Naive thymus-derived CD4-positive, alpha-beta T cell (primary cell): ENCODE measurements at regions of chr19 and their contacts with region 1.

Region 1: GRCh38 chr19:37172368-37173366 is at the start of gene ZNF585A:
- DNase-seq: peak; percentile 68 to 92 (median 88)
- ATAC-seq: peak; percentile 100
- H3K4me3 ChIP-seq: peak within 1 kb of the TSS; percentile 90
- H3K4me3 Mint-ChIP-seq: peak within 1 kb of the TSS in 3 of 10 donors; percentile 36 to 73 (median 39)
- H3K27ac ChIP-seq: peak within 1 kb of the TSS; percentile 84
- H3K27ac Mint-ChIP-seq: no peak within 1 kb of the TSS
- H3K4me1 ChIP-seq: no peaks in the 10 kb centered on the region
- H3K4me1 Mint-ChIP-seq: peaks cover 0 to 16% (median 4%) of the 10 kb centered on the region in 7 donors
- H3K27me3 ChIP-seq: no peaks in the 10 kb centered on the region
- H3K27me3 Mint-ChIP-seq: no peaks in the 10 kb centered on the region
- total RNA-seq, gene ZNF585A: 3.5 to 24.3 (median 7.2) TPM

Region 2: GRCh38 chr19:36378625-36379509 is 793.8 kb before region 1 on chr19 and contains the start of gene ZFP14:
- CTCF ChIA-PET with region 1: no interaction called
- POLR2A ChIA-PET with region 1: no interaction called
- intact Hi-C with region 1: loop called in 1 of 2 experiments (anchors 1 kb)
- DNase-seq: peak; percentile 86 to 95 (median 93)
- ATAC-seq: peak; percentile 99
- H3K4me3 ChIP-seq: peak within 1 kb of the TSS; percentile 86
- H3K4me3 Mint-ChIP-seq: peak within 1 kb of the TSS; percentile 82 to 98 (median 94)
- H3K27ac ChIP-seq: peak within 1 kb of the TSS; percentile 86
- H3K27ac Mint-ChIP-seq: peak within 1 kb of the TSS; percentile 55 to 98 (median 94)
- H3K4me1 ChIP-seq: peaks cover 0 to 10% of the 10 kb centered on the region in 2 donors
- H3K4me1 Mint-ChIP-seq: peaks cover 9 to 23% (median 21%) of the 10 kb centered on the region in 7 donors
- H3K27me3 ChIP-seq: no peaks in the 10 kb centered on the region
- H3K27me3 Mint-ChIP-seq: no peaks in the 10 kb centered on the region
- total RNA-seq, gene ZFP14: 5.3 to 24.0 (median 9.2) TPM

Region 3: DNA sequence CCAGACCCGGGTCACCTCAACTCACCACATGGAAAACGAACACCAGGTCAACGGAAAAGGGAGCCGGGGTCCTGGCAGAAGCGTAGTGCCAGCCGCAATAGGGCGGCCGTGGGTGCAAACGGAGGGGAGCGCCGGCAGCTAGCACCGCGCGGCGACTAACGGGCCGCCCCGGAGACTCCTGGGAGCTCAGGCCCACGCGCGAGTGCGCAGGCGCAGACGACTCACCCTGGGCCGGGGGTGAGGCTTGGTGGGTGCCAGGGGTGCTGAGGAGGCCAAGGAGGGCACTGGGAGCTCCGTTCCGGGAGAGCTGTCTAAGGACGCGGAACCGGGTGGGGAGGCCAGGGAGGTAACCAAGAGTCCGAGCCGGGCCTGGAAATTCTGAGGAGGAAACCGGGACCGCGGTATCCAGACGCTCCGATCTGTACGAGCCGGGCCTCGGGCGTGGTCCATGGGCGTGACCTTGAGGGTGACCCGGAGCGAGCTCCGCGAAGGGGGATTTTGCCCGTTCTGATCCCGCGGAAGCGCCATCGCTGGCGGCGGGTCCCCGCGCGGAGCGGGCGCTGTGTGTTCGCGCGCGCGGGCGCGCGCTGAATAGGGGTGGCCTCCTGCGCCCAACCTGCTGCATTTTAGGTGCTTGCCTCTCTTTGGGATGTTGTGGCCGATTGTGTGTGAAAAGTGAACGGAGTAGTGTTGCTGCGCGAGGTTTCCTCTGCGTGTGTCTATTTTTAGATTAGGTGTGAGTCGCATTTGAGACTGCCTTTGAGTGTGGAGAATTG is 567.4 kb before region 1 on chr19 and contains the start of gene ZNF382:
- CTCF ChIA-PET with region 1: no interaction called
- POLR2A ChIA-PET with region 1: no interaction called
- intact Hi-C with region 1: loop called in 1 of 2 experiments (anchors 1 kb)
- DNase-seq: peak; percentile 77 to 92 (median 86)
- ATAC-seq: peak; percentile 80
- H3K4me3 ChIP-seq: peak within 1 kb of the TSS; percentile 95
- H3K4me3 Mint-ChIP-seq: peak within 1 kb of the TSS; percentile 81 to 99 (median 93)
- H3K27ac ChIP-seq: peak within 1 kb of the TSS; percentile 84
- H3K27ac Mint-ChIP-seq: peak within 1 kb of the TSS; percentile 78 to 98 (median 93)
- H3K4me1 ChIP-seq: peaks cover 7 to 15% of the 10 kb centered on the region in 2 donors
- H3K4me1 Mint-ChIP-seq: peaks cover 20 to 32% (median 27%) of the 10 kb centered on the region in 7 donors
- H3K27me3 ChIP-seq: no peaks in the 10 kb centered on the region
- H3K27me3 Mint-ChIP-seq: no peaks in the 10 kb centered on the region
- total RNA-seq, gene ZNF382: 5.4 to 20.2 (median 12.2) TPM

Region 4: GRCh38 chr19:36850559-36851442 is 321.9 kb before region 1 on chr19 and contains the start of gene ZNF345:
- CTCF ChIA-PET with region 1: no interaction called
- POLR2A ChIA-PET with region 1: no interaction called
- intact Hi-C with region 1: loop called (anchors 1 to 5 kb)
- DNase-seq: peak; percentile 62 to 91 (median 88)
- ATAC-seq: peak; percentile 93
- H3K4me3 ChIP-seq: peak within 1 kb of the TSS; percentile 92
- H3K4me3 Mint-ChIP-seq: no peak within 1 kb of the TSS
- H3K27ac ChIP-seq: peak within 1 kb of the TSS; percentile 86
- H3K27ac Mint-ChIP-seq: no peak within 1 kb of the TSS
- H3K4me1 ChIP-seq: peaks cover 9 to 16% of the 10 kb centered on the region in 2 donors
- H3K4me1 Mint-ChIP-seq: peaks cover 0 to 22% (median 13%) of the 10 kb centered on the region in 7 donors
- H3K27me3 ChIP-seq: no peaks in the 10 kb centered on the region
- H3K27me3 Mint-ChIP-seq: no peaks in the 10 kb centered on the region
- total RNA-seq, gene ZNF345: 6.8 to 18.2 (median 7.8) TPM

Region 5: GRCh38 chr19:37114020-37114419 is 58.6 kb before region 1 on chr19:
- CTCF ChIA-PET with region 1: no interaction called
- POLR2A ChIA-PET with region 1: no interaction called
- intact Hi-C with region 1: no loop called
- DNase-seq: no peak
- ATAC-seq: no peak
- H3K4me3 ChIP-seq: peak overlapping the region; percentile 0
- H3K4me3 Mint-ChIP-seq: peak overlapping the region in 1 of 10 donors; percentile 21
- H3K27ac ChIP-seq: no peak overlapping the region
- H3K27ac Mint-ChIP-seq: no peak overlapping the region
- H3K4me1 ChIP-seq: no peaks in the 10 kb centered on the region
- H3K4me1 Mint-ChIP-seq: peaks cover 0 to 4% (median 0%) of the 10 kb centered on the region in 7 donors
- H3K27me3 ChIP-seq: no peaks in the 10 kb centered on the region
- H3K27me3 Mint-ChIP-seq: no peaks in the 10 kb centered on the region

Region 6: DNA sequence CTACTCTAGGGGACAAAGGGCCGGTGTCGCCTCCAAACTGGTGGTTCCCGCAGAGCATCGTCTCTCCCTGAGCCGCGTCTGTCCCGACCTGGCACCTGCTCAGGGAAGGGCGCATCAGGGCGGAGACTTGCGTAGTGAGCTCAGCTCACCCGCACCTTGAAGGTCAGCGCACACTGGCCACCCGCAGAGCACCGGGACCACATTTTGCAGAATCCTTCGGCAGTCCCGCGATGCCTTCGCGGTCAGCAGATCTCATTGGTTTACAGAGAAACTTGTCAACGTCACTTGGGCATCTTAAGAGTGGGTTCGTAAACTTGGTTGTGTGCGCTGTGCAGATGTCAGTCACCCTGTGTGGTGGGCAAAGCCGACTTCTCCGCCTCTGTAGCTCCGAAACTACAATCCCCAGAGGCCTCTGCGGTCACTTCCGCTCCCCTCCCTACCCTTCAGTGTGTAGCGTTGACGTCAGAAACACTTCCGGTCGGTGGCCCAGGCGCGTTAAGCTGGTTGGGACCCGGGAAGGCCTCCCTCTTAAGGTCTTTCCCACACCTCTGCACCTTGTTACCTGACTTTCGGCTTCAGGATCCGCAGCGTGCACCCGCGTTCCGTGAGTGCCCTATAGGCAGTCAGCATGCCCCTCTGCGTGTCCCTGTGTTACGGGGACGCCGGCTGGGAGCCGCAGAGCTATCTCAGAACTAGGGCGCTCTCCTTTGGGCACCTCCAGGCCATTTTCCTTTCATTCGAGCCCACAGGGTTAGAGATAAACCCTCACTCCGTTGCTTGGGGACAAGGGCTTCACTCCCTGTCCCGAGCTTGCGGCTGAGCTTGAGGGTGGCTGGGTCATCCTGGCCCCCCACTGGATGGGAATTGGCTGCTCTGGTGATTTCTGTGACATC is 161.8 kb after region 1 on chr19:
- CTCF ChIA-PET with region 1: no interaction called
- POLR2A ChIA-PET with region 1: interaction called, 3 read pairs
- intact Hi-C with region 1: loop called in 1 of 2 experiments (anchors 2 kb)
- DNase-seq: peak; percentile 52 to 93 (median 84)
- ATAC-seq: peak; percentile 99
- H3K4me3 ChIP-seq: peak overlapping the region; percentile 69
- H3K4me3 Mint-ChIP-seq: peak overlapping the region; percentile 82 to 93 (median 90)
- H3K27ac ChIP-seq: peak overlapping the region; percentile 88
- H3K27ac Mint-ChIP-seq: peak overlapping the region; percentile 77 to 97 (median 93)
- H3K4me1 ChIP-seq: peaks cover 6 to 10% of the 10 kb centered on the region in 2 donors
- H3K4me1 Mint-ChIP-seq: peaks cover 9 to 47% (median 33%) of the 10 kb centered on the region in 7 donors
- H3K27me3 ChIP-seq: no peaks in the 10 kb centered on the region
- H3K27me3 Mint-ChIP-seq: no peaks in the 10 kb centered on the region

Region 7: DNA sequence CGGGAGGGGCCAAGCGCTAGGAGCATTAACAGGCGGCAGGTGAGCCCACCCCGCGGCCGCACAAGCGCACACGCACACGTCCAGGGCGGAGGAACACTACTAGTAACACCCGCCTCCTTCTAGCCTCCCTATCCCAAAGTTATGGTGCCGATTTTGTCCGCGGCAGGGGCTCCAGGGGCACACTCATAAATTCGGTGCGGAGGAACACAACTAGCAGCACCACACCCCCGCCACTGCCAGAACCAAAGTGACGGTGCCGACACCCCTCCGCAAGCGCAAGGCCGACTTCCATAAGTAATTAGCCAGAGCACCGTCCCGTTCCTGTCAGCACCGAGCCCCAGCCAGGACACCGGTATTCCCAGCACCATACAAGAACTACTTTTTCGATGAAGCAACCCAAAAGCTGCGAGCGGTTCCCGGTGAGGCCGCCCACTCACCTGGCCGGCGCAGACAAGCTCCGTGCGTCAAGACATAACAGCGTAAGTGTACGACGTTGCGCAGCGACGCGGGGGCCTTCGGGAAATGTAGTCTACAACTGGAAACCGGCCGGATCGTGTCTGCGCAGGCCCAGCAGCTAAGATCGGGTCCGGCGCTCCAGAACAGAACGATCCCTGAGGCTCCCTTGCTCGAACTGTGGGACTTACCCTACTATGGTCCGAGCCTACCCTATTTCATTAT is 421.8 kb after region 1 on chr19 and contains the starts of genes ZNF540 and ZNF571:
- CTCF ChIA-PET with region 1: no interaction called
- POLR2A ChIA-PET with region 1: no interaction called
- intact Hi-C with region 1: loop called in 1 of 2 experiments (anchors 2 kb)
- DNase-seq: peak; percentile 70 to 95 (median 92)
- ATAC-seq: peak; percentile 96
- H3K4me3 ChIP-seq: peak within 1 kb of the TSS; percentile 80
- H3K4me3 Mint-ChIP-seq: peak within 1 kb of the TSS; percentile 94 to 100 (median 98)
- H3K27ac ChIP-seq: peak within 1 kb of the TSS; percentile 93
- H3K27ac Mint-ChIP-seq: peak within 1 kb of the TSS; percentile 93 to 100 (median 99)
- H3K4me1 ChIP-seq: peaks cover 7 to 18% of the 10 kb centered on the region in 2 donors
- H3K4me1 Mint-ChIP-seq: peaks cover 13 to 56% (median 39%) of the 10 kb centered on the region in 7 donors
- H3K27me3 ChIP-seq: no peaks in the 10 kb centered on the region
- H3K27me3 Mint-ChIP-seq: no peaks in the 10 kb centered on the region
- total RNA-seq, gene ZNF540: 0.99 to 22.7 (median 17.6) TPM
- total RNA-seq, gene ZNF571: 1.5 to 12.4 (median 9.0) TPM